Esophagus muscularis mucosa (tissue), 4 donors: ENCODE measurements at regions of chr20 and their contacts with region 1.

Region 1: DNA sequence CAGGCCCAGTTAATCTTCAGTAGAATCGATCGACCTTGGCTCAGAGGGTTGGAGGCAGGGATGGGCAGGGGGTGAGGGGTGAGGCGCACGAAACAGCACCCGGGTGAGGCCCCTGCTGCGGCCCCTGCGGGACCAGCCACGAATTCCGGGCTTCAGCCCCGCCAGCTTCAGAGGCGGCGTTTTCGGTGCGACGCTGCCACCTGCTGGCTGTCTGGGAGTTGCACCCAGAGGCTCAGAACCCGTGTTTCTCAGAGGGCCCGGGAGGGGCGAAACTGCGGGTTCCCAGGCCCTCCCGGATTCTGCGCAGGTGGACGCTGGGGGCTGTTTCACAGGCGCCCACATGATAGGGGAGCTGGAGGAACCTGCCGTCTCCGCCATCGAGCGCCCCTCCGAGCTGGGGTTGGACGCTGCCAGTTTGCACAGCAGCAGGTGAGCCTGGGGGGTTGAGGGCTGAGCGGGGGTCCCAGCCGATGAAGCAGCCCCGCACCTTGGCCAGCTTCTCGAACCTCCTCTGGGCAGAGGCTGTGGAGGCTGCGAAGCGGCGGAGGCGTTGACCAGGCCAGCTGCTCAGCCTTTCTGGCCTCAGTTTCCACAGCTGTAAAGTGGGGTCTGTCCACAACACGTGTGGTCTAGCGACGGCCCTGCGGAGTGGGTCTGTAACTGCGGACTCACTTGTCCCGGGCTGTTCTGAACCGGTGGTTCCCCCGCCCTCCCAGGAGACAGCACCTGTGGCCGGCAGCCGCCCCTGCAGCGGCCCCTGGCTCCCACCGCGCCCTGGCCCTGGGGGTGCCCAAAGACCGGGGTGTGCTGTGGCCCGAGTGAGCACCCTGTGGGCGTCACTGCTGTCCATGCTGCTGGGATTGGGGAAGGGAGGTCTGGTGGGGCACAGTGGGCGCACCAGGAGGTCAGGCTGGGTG is 2.5 kb upstream of the BHLHE23 start:
- DNase-seq: no peak
- H3K4me3 ChIP-seq: peak overlapping the region in 2 of 4 donors; percentile 21 to 36
- H3K27ac ChIP-seq: no peak overlapping the region
- H3K4me1 ChIP-seq: peaks cover 20 to 57% (median 44%) of the 10 kb centered on the region in 4 donors
- H3K27me3 ChIP-seq: peaks cover 19 to 100% (median 62%) of the 10 kb centered on the region in 4 donors
- CTCF ChIP-seq: peak; percentile 94 to 95 (median 94)
- EP300 ChIP-seq: no peak
- POLR2A ChIP-seq: no peak

Region 2: GRCh38 chr20:62872184-62872847 is 137.0 kb before region 1 on chr20:
- intact Hi-C with region 1: loop called (anchors 2 kb)
- DNase-seq: no peak
- H3K4me3 ChIP-seq: no peak overlapping the region
- H3K27ac ChIP-seq: no peak overlapping the region
- H3K4me1 ChIP-seq: peaks cover 26 to 33% (median 29%) of the 10 kb centered on the region in 4 donors
- H3K27me3 ChIP-seq: no peaks in the 10 kb centered on the region
- CTCF ChIP-seq: no peak
- EP300 ChIP-seq: no peak
- POLR2A ChIP-seq: no peak

Region 3: GRCh38 chr20:62887147-62887859 is 122.0 kb before region 1 on chr20:
- intact Hi-C with region 1: no loop called
- DNase-seq: no peak
- H3K4me3 ChIP-seq: no peak overlapping the region
- H3K27ac ChIP-seq: peak overlapping the region in 3 of 4 donors; percentile 28 to 65 (median 47)
- H3K4me1 ChIP-seq: peaks cover 3 to 14% (median 14%) of the 10 kb centered on the region in 4 donors
- H3K27me3 ChIP-seq: no peaks in the 10 kb centered on the region
- CTCF ChIP-seq: no peak
- EP300 ChIP-seq: no peak
- POLR2A ChIP-seq: no peak

Region 4: GRCh38 chr20:62900052-62900691 is 109.1 kb before region 1 on chr20:
- intact Hi-C with region 1: loop called (anchors 5 kb)
- DNase-seq: no peak
- H3K4me3 ChIP-seq: no peak overlapping the region
- H3K27ac ChIP-seq: peak overlapping the region in 2 of 4 donors; percentile 22 to 36
- H3K4me1 ChIP-seq: peaks cover 22 to 34% (median 29%) of the 10 kb centered on the region in 4 donors
- H3K27me3 ChIP-seq: no peaks in the 10 kb centered on the region
- CTCF ChIP-seq: peak; percentile 79 to 97 (median 93)
- EP300 ChIP-seq: no peak
- POLR2A ChIP-seq: no peak

Region 5: DNA sequence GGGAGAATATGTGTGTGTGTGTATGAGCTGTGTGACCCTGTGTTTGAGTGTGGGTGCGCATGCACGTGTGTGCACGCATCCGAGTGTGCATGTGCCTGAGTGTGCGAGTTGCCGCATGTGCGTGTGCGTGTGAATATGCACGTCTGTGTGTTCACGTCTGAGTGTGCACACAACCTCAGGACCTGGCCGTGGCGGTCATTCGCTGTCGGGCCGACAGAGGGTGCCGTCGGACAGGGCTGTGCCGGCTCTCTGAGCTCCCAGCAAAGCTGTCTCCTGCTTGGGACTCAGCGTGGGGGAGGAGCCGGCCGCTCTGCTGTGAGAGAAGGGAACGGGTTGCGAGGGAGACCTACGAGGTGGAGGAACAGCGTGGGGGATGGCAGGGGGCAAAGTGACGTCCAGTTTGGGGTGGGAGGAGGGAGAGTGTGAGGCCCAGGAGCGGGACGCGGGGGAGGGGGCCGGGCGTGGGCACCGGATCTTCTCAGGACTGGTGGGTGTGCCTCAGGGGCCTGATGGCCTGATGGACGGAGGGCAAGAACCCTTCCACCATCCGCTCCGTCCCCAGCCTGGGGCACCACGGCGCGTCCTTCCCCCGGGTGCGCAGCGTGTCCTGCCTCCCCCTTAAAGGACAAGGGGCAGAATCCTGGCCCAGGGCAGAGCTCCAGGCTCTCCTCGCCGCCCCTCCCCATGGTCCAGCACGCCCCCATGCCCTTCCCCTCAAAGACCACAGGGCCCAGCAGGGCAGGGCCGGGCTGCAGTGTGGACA is 36.9 kb before region 1 on chr20:
- intact Hi-C with region 1: loop called (anchors 2 kb)
- DNase-seq: peak; percentile 93
- H3K4me3 ChIP-seq: peak overlapping the region; percentile 33 to 45 (median 35)
- H3K27ac ChIP-seq: no peak overlapping the region
- H3K4me1 ChIP-seq: peaks cover 7 to 13% (median 13%) of the 10 kb centered on the region in 4 donors
- H3K27me3 ChIP-seq: peaks cover 8 to 89% (median 37%) of the 10 kb centered on the region in 4 donors
- CTCF ChIP-seq: peak; percentile 82 to 93 (median 93)
- EP300 ChIP-seq: no peak
- POLR2A ChIP-seq: no peak

Region 6: DNA sequence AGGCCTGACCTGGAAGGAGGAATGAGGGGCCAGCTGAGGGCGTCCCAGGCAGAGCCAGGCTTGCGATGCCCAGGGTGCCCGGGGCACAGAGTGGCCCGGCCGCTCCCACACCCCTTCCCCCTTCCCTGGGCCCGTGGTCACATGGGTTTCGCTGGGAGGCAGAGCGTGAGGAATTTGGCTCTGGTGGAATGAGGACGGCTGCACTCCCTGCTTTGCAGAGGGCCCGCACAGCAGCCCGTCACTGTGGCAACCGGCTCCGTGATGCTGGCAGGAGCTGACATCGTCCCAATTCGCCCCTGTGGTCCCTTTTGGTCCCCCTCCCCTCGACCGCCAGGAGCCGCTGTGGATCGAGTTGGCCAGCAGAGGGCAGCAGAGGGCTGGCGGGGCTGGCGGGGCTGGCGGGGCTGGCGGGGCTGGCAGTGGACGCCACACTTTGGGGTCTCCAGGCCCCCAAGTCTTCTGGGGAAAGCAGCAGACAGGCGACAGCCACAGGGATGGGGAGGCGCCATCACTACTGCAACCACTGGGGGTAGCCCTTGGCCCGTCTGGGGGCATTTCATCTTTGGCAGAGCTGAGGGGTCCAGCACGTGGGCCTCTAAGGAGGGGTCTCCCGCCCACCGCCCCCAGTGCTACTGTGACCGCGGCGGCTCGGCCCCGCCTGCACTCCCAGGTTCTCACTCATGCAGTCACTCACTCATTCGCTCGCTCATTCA is 47.1 kb after region 1 on chr20:
- intact Hi-C with region 1: no loop called
- DNase-seq: no peak
- H3K4me3 ChIP-seq: peak overlapping the region in 1 of 4 donors; percentile 28
- H3K27ac ChIP-seq: no peak overlapping the region
- H3K4me1 ChIP-seq: peaks cover 2 to 10% (median 8%) of the 10 kb centered on the region in 4 donors
- H3K27me3 ChIP-seq: peaks cover 0 to 92% (median 7%) of the 10 kb centered on the region in 4 donors
- CTCF ChIP-seq: peak; percentile 73 to 96 (median 90)
- EP300 ChIP-seq: no peak
- POLR2A ChIP-seq: no peak

Region 7: GRCh38 chr20:63280929-63281545 is 271.7 kb after region 1 on chr20:
- intact Hi-C with region 1: no loop called
- DNase-seq: no peak
- H3K4me3 ChIP-seq: no peak overlapping the region
- H3K27ac ChIP-seq: no peak overlapping the region
- H3K4me1 ChIP-seq: no peaks in the 10 kb centered on the region
- H3K27me3 ChIP-seq: no peaks in the 10 kb centered on the region
- CTCF ChIP-seq: no peak
- EP300 ChIP-seq: no peak
- POLR2A ChIP-seq: no peak